HEK293 (cell line): ENCODE measurements at regions of chr19 and their contacts with region 1.

Region 1: GRCh38 chr19:42108527-42109389 is 23.5 kb downstream of the POU2F2 start:
- H3K4me3 ChIP-seq: no peak overlapping the region
- H3K27ac ChIP-seq: no peak overlapping the region
- H3K4me1 ChIP-seq: peaks cover under 1% of the 10 kb centered on the region; the same call in 1 of the 2 replicates
- CTCF ChIP-seq: peak; percentile 100

Region 2: DNA sequence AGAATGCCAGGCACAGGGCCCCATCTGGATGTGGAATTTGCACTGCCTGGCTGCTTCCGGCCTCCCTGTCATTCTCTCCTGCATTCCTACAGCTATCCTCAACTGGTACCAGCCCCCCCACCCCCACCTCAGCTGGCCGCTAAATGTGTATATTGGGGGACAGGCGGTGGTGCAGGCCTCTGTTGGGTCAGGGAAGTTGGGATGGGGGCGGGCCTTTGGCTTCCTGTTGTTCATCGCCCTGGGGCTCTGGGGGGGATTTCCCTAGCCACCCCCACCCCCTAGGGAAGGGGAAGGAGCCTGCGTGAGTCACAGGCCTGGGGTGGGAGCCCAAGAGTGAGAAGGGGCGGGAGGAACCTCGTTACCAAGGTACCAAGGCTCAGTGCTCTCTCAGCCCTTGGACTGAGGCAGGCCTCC is 12.9 kb after region 1 on chr19:
- CTCF ChIA-PET with region 1: interaction called, 122 read pairs
- POLR2A ChIA-PET with region 1: interaction called, 5 read pairs
- H3K4me3 ChIP-seq: no peak overlapping the region
- H3K27ac ChIP-seq: no peak overlapping the region
- H3K4me1 ChIP-seq: no peaks in the 10 kb centered on the region
- CTCF ChIP-seq: no peak

Region 3: DNA sequence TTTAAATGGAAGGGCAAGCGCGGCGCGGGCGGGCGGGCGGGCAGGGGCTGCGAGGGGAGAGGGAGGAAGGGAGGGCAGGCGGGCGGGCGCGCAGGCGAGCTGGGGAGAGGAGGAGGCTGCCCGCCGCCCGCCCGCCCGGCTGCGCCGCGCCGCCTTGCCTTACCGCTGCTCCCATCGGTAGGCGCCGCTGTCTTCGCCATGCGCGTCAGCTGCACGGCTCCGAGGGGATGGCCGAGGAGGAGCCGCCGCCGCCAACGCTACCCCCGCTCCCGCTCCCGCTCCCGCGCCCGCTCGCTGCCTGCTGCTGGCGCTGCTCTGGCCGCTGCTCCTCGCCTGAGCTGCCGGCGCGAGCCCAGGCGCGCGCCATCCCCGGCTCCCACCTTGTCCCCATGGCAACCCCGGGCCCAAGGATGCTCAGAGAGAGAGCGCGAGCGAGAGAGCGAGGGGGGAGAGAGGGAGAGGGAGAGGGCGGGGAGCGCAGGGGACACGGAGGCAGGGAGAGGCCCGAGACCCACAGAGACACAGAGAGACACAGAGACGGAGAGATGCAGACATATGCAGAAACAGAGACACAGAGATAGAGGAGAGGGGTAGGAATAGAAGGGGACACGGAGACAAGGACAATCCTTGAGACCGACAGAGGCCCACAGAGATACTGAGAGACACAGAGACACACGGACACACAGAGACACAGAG is 68.4 kb after region 1 on chr19:
- CTCF ChIA-PET with region 1: interaction called, 41 read pairs
- POLR2A ChIA-PET with region 1: no interaction called
- H3K4me3 ChIP-seq: peak overlapping the region; percentile 27; the same call in 1 of the 2 replicates
- H3K27ac ChIP-seq: no peak overlapping the region
- H3K4me1 ChIP-seq: peaks cover 10% of the 10 kb centered on the region
- CTCF ChIP-seq: 0 out of 2 replicates have a peak, but pooled peaks have one; percentile 45

Region 4: DNA sequence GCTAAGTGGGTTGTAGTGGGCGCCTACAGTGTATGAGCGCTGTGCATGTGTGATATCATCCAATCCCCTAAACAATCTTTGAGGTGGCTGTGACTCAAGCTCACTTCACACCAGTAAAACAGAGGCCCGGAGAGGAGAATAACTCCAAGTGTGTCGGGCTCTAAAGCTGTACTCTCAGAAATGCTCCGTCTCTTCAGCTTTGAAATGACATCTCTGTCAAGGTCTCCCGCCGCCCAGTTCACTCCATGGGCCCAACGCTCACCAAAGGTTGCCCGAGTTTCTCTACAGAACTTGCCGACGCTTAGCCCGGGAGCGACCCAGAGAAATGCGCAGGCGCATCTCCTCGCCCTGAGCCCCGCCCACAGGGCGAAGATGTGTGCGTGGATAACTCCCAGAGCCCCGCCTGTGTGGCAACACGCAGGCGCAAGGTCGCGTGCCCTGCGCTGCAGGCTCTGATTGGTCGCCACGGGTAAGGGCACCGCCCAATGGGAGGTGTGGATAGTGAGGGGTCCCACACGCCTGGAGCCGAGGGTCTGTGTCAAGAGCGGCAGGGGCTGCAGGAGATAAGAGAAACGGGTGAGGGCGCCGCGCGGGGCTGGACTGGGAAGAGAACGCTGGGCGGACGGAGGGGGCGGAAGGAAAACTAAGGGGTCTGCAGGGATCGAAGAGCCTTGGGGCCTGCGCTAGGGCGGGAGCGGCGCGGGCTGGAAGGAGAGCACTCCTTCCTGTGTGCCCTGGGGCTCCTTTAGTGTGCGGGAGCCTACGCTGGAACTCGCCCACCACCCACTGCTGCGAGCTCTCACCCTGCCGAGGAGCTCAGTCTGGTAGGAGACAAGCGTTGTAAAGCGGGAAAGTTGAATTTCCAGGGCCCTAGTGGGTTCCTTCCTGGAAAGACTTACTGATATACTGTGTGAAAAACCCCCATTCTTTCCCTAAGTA is 111.3 kb after region 1 on chr19 and contains the start of gene ZNF526:
- CTCF ChIA-PET with region 1: interaction called, 17 read pairs
- POLR2A ChIA-PET with region 1: no interaction called
- H3K4me3 ChIP-seq: peak within 1 kb of the TSS; percentile 87
- H3K27ac ChIP-seq: peak within 1 kb of the TSS; percentile 89
- H3K4me1 ChIP-seq: peaks cover 23% of the 10 kb centered on the region
- CTCF ChIP-seq: peak; percentile 93

Region 5: GRCh38 chr19:42433503-42434260 is 324.9 kb after region 1 on chr19:
- CTCF ChIA-PET with region 1: interaction called, 33 read pairs
- POLR2A ChIA-PET with region 1: no interaction called
- H3K4me3 ChIP-seq: no peak overlapping the region
- H3K27ac ChIP-seq: no peak overlapping the region
- H3K4me1 ChIP-seq: peaks cover 5% of the 10 kb centered on the region; the same call in 1 of the 2 replicates
- CTCF ChIP-seq: peak; percentile 53; the same call in 1 of the 2 replicates